GM13977 (cell line): ENCODE measurements at regions of chr1 and their contacts with region 1.

Region 1: GRCh38 chr1:111222308-111223125 is 5.0 kb upstream of the CHI3L2 start:
- DNase-seq: peak; percentile 51
- CTCF ChIP-seq: peak; percentile 94

Region 2: GRCh38 chr1:111399792-111400610 is 177.5 kb after region 1 on chr1:
- in situ Hi-C with region 1: loop called (anchors 10 kb)
- DNase-seq: peak; percentile 39
- CTCF ChIP-seq: peak; percentile 65

Region 3: GRCh38 chr1:111448918-111449702 is 226.6 kb after region 1 on chr1 and contains the starts of genes ATP5PB and WDR77:
- in situ Hi-C with region 1: loop called (anchors 10 kb)
- DNase-seq: peak; percentile 95
- CTCF ChIP-seq: no peak

Region 4: GRCh38 chr1:111619635-111620440 is 397.3 kb after region 1 on chr1 and contains the start of gene RAP1A:
- in situ Hi-C with region 1: loop called (anchors 25 kb)
- DNase-seq: peak; percentile 95
- CTCF ChIP-seq: no peak

Region 5: DNA sequence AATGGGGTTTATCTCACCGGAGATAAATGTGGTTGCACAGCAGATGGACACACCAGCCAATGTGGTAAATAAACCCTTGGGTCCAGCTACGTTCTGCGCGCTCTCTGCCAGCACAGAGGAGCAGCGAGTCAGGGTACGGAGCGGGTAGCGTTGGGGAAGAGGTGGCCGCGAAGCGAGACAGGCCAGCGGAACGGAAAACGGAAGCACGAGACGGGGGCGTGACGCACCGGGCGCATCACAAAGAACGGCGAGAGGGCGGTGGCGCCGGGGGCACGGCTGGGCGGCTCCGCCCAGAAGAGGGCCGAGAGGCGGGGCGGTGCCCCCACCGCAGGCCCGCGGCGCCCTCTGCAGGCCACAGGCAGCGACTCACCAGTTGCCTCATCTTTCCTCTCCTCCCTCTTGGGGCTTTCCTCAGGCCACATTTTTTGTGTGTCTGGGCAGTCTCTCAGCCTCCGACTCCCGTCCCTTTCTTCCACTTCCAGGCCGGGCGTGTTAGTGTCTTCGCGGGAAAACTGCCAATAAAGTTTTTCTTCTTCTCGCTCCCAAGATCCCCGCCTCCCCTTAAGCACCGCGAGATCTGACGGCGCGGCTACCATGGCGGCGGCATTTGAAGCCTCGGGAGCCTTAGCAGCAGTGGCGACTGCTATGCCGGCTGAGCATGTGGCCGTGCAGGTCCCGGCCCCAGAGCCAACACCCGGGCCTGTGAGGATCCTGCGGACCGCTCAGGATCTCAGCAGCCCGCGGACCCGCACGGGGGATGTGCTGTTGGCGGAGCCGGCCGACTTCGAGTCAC is 533.0 kb after region 1 on chr1 and contains the start of gene DDX20:
- in situ Hi-C with region 1: loop called (anchors 25 kb)
- DNase-seq: peak; percentile 97
- CTCF ChIP-seq: peak; percentile 91